ENCODE measurements at regions of chr6 and their contacts with region 1.

Region 1: DNA sequence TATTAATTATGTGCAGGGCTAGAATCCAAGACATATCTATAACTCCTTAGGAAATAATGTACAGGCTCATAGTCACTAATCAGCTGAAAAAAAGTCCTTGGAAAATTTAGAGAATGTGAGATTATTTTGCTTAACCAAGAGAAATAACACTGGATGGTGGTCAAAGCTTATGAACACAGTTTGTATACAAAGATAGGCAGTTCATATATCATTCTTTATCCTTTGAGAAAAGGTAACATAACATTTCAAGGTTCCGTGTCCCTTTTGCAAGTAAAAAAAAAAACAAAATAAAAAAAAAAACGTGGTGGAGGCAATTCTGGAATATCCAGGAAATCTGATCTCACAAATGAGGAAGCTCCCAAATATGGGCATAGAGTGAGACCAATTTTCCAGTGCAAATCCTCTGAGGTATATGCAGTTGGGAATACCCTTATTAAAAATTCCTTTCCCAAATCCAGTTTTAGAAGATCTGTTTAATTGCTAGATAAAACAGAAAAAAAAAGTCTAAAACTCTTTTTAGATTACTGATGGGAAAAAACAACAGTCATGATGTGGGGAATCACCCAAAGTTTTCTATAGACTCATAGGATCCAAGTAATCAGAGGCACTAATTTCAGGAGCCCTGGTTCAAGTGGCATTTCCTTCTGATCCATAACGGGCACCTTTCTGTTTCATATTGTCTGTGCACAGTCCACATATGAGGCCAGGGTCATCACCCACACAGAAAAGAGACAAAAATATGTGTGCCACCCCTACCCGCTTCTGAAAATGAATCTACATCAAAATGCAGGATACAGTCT is 17.7 kb upstream of the TNFAIP3 start:
- DNase-seq: peak; percentile 78
- H3K4me3 Mint-ChIP-seq: no peak overlapping the region
- H3K27ac Mint-ChIP-seq: peak overlapping the region; percentile 79
- H3K4me1 Mint-ChIP-seq: peaks cover 35% of the 10 kb centered on the region
- H3K27me3 Mint-ChIP-seq: no peaks in the 10 kb centered on the region

Region 2: DNA sequence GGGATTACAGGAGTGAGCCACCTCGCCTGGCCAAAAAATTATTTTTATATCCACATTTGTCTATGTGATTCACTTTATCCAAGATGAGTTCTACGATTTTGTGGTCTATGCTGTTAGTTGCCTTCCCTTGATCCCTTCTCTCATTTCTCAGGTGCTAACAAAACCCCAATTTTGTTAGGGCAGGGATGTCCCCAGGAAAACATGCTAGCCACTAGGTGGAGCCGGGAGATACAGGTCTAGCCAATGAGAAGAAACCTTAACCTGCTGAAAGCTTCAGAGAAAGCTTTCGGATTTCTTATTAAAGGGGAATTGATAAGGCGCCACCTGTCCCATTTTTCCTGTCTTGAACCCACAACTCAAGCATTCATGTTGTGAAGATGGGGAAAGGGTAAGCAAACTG is 187.8 kb before region 1 on chr6:
- CTCF ChIA-PET with region 1: no interaction called
- POLR2A ChIA-PET with region 1: no interaction called
- intact Hi-C with region 1: loop called (anchors 1 kb)
- DNase-seq: peak; percentile 58
- H3K4me3 Mint-ChIP-seq: no peak overlapping the region
- H3K27ac Mint-ChIP-seq: no peak overlapping the region
- H3K4me1 Mint-ChIP-seq: peaks cover 24% of the 10 kb centered on the region
- H3K27me3 Mint-ChIP-seq: peaks cover 8% of the 10 kb centered on the region

Region 3: DNA sequence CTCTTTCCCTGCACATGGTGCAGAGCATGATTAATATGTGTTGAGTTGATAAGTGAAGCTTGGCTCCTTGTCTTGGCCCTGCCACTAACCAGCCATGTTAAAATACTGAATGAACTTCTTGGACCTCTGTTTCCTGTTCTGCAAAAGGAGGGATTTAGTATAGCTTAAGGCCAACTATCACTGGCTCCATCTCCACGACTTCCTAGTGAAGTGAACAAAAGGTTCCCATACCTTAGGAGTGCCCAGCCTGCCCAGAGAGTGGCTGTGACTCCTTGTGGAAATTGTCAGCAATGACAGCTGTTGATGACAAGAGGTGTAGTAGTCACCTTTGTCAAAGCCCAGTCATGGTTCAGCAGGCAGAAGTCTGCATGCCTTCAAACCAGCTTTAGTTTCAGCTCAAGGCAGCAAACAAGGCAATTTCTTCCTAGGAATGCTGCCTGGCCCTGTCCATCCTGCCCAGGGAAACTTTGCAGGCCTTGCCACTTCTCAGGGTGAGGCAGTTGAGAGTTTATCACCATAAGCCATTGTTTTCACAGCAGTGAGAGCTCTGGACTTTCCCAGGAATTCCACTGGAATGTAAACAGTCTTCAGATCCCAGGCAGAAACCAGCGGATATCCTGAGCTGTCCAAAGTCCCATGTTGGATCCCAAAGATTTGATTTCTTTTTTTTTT is 152.0 kb before region 1 on chr6:
- CTCF ChIA-PET with region 1: no interaction called
- POLR2A ChIA-PET with region 1: interaction called, 3 read pairs
- intact Hi-C with region 1: loop called (anchors 2 kb)
- DNase-seq: peak; percentile 52
- H3K4me3 Mint-ChIP-seq: no peak overlapping the region
- H3K27ac Mint-ChIP-seq: peak overlapping the region; percentile 43
- H3K4me1 Mint-ChIP-seq: peaks cover 57% of the 10 kb centered on the region
- H3K27me3 Mint-ChIP-seq: peaks cover 1% of the 10 kb centered on the region

Region 4: DNA sequence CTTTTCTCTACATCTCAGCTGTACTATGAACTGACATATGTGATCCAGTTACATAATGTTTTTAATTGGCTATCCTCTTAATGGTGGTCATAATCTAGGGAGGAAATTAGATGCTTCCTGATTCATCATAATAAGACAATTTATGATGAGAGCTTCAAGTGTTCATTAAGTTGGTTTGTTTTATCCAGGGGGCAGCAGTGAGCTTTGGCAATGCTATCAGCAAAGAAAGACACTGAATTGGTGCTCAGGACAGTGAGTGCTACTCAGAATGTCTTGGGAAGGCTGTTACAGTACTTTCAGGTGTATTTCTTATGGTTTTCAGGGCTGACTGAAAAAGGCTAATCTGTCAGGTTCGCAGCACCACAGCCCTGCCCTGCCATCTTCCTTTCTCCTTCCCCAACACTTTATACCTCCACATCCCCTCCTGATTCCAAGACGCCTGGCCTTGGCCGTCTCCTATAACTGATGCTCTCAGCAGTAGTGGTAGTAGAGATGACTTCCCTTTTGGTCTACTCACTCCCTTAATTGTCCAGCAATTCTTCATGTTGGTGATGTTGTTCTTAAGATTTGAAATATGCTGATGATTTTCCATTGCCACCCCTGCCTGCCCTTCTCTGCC is 49.3 kb before region 1 on chr6:
- CTCF ChIA-PET with region 1: interaction called, 6 read pairs
- POLR2A ChIA-PET with region 1: no interaction called
- intact Hi-C with region 1: loop called (anchors 1 kb)
- DNase-seq: peak; percentile 72
- H3K4me3 Mint-ChIP-seq: peak overlapping the region; percentile 4
- H3K27ac Mint-ChIP-seq: peak overlapping the region; percentile 69
- H3K4me1 Mint-ChIP-seq: peaks cover 57% of the 10 kb centered on the region
- H3K27me3 Mint-ChIP-seq: no peaks in the 10 kb centered on the region

Region 5: GRCh38 chr6:137823826-137824555 is 25.4 kb before region 1 on chr6:
- CTCF ChIA-PET with region 1: no interaction called
- POLR2A ChIA-PET with region 1: interaction called, 6 read pairs
- intact Hi-C with region 1: loop called (anchors 1 kb)
- DNase-seq: peak; percentile 83
- H3K4me3 Mint-ChIP-seq: peak overlapping the region; percentile 70
- H3K27ac Mint-ChIP-seq: peak overlapping the region; percentile 96
- H3K4me1 Mint-ChIP-seq: peaks cover 83% of the 10 kb centered on the region
- H3K27me3 Mint-ChIP-seq: no peaks in the 10 kb centered on the region

Region 6: DNA sequence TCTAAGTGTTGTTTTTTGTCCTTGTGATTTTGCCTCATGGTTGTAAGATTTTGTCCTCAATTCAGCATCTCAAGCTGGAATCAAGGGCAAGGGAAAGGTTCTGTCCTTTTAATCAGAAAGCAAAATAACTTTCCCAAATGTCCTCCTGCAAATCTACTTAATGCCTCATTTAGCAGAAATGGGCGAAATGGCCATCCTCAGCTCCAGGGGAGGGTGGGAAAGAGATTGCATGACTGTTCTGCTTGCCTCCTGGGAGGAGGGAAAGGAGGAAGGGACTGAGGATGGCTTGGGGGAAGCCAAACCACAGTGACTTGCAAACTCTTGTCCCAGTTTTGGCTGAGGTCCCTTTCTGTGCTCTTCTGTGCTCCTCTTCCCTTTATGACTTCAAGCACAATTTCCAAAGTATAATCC is 61.0 kb after region 1 on chr6:
- CTCF ChIA-PET with region 1: no interaction called
- POLR2A ChIA-PET with region 1: no interaction called
- intact Hi-C with region 1: no loop called
- DNase-seq: no peak
- H3K4me3 Mint-ChIP-seq: no peak overlapping the region
- H3K27ac Mint-ChIP-seq: no peak overlapping the region
- H3K4me1 Mint-ChIP-seq: peaks cover 39% of the 10 kb centered on the region
- H3K27me3 Mint-ChIP-seq: no peaks in the 10 kb centered on the region

Region 7: DNA sequence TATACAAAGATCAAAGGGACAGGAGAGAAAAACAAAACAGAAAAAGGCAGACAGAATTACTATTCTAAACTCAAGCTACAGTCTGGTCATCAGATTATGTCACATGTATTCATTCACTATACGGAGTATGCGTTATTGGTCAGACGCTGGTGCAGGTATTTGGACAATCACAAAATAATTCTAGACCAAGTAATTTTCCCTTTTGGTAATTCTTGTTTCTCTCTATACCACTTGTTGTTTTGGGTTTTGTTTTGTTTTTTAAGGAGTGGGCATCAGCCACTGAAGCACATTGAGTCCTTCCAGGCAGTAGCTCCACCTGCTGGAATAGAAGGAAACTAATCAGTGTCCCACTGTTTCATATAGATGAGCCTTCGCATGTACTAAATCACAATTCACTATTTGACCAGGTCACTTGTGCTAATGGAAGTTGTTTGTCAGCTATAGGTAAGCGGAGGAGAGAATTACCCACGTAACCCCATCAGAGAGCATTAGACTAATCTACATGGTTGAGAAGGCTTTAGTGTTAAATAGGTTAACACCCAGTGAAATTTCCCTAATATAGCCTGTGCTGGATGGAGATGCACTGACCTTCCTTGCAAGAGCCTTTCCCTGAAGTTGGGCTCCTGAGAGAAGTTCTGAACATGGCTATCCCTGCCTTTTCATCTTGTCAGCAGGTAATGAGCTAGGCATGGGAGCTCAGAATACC is 95.6 kb after region 1 on chr6:
- CTCF ChIA-PET with region 1: no interaction called
- POLR2A ChIA-PET with region 1: no interaction called
- intact Hi-C with region 1: loop called (anchors 1 kb)
- DNase-seq: peak; percentile 24
- H3K4me3 Mint-ChIP-seq: no peak overlapping the region
- H3K27ac Mint-ChIP-seq: peak overlapping the region; percentile 47
- H3K4me1 Mint-ChIP-seq: peaks cover 40% of the 10 kb centered on the region
- H3K27me3 Mint-ChIP-seq: no peaks in the 10 kb centered on the region